Naive thymus-derived CD4-positive, alpha-beta T cell (primary cell): ENCODE measurements at regions of chr1 and their contacts with region 1.

Region 1: DNA sequence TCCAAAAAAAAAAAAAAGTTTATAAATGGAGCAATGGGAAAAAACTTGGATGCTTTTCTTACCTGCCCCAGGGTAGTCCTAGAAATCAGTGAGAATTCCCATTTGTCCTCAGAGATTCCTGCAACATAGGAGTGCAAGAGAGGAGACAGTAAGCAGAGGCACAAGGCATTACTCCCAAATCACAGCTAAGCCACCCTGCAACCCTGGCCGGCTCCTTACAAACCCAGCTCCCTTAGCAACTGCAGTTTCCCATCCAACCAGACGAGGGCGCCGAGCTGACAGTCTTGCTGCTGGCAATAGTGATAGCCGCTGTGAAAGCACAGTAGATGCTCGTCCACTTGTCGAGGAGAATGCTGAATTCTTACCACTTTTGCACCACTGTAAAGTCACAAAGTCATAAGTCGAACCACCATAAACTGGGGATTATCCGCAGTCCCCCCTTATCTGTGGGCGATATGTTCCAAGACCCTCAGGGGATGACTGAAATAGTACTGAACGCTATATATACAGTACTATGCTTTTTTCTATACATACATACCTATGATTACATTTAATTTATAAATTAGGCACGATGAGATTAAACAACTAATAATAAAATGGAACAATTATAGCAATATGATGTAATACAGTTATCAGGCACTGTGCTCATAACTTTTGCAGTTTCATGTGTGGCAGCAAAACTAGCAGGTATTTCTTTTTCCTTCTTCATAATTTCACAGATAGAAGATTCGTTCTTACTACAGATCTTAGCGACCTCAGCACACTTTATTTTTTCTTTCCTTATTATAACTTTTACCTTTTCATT is 6.0 kb upstream of the PITHD1 start:
- DNase-seq: peak; percentile 52 to 84 (median 78)
- ATAC-seq: peak; percentile 85
- H3K4me3 ChIP-seq: no peak overlapping the region
- H3K4me3 Mint-ChIP-seq: peak overlapping the region in 1 of 10 donors; percentile 17
- H3K27ac ChIP-seq: no peak overlapping the region
- H3K27ac Mint-ChIP-seq: peak overlapping the region in 4 of 9 donors; percentile 4 to 53 (median 23)
- H3K4me1 ChIP-seq: peaks cover 5 to 7% of the 10 kb centered on the region in 2 donors
- H3K4me1 Mint-ChIP-seq: peaks cover 2 to 38% (median 29%) of the 10 kb centered on the region in 7 donors
- H3K27me3 ChIP-seq: no peaks in the 10 kb centered on the region
- H3K27me3 Mint-ChIP-seq: no peaks in the 10 kb centered on the region

Region 2: GRCh38 chr1:23916209-23917131 is 144.2 kb after region 1 on chr1:
- CTCF ChIA-PET with region 1: interaction called, 47 read pairs
- POLR2A ChIA-PET with region 1: interaction called, 6 read pairs
- intact Hi-C with region 1: loop called (anchors 1 kb)
- DNase-seq: peak; percentile 24 to 66 (median 55)
- ATAC-seq: peak; percentile 95
- H3K4me3 ChIP-seq: no peak overlapping the region
- H3K4me3 Mint-ChIP-seq: no peak overlapping the region
- H3K27ac ChIP-seq: no peak overlapping the region
- H3K27ac Mint-ChIP-seq: peak overlapping the region in 2 of 9 donors; percentile 64 to 72
- H3K4me1 ChIP-seq: peaks cover 7 to 8% of the 10 kb centered on the region in 2 donors
- H3K4me1 Mint-ChIP-seq: peaks cover 10 to 41% (median 30%) of the 10 kb centered on the region in 7 donors
- H3K27me3 ChIP-seq: no peaks in the 10 kb centered on the region
- H3K27me3 Mint-ChIP-seq: peaks cover 0 to 2% (median 0%) of the 10 kb centered on the region in 5 donors